Ascending aorta (tissue), 2 donors: ENCODE measurements at regions of chr10 and their contacts with region 1.

Region 1: DNA sequence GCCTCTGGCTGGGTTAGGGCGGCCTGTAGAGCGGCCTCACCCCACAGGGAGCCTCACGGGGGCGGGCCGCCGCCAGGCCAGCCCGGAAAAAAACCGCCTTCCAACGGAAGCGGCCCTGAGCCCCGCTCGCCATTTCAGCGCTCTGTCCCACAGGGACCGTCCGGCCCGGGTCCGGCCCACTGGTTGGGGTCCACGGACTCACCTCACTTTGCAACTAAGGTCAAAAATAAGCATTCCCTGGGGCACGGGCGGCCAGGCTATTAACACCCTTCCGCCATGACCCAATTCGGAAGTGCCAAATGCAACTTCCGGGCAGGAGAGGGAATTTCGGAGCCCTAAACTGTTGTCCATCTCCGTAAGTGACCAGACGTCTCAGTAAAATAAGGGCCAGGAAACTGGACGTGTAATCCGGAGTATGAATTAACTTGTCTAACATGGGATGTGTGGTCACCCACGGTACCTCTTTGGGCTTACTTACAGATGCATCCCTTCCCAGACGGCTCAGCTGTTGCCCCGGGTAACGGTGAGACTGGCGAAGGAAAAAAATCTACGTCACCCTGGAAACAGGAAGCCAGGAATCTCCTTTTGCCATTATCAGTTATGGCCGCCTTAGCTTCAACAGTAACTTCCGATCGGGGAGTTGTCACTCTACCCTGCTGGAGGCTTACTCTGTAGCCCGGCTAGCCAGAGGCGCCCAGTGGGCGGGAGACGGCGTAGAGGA is at the start of gene BBIP1:
- DNase-seq: no peak
- H3K4me3 ChIP-seq: peak within 1 kb of the TSS; percentile 78 to 98
- H3K27ac ChIP-seq: peak within 1 kb of the TSS; percentile 96 to 97
- H3K4me1 ChIP-seq: peaks cover 0 to 11% of the 10 kb centered on the region in 2 donors
- H3K27me3 ChIP-seq: no peaks in the 10 kb centered on the region
- CTCF ChIP-seq: no peak
- total RNA-seq, gene BBIP1: 1.5 TPM

Region 2: GRCh38 chr10:109633846-109634245 is 1285.0 kb before region 1 on chr10:
- intact Hi-C with region 1: no loop called
- DNase-seq: no peak
- H3K4me3 ChIP-seq: no peak overlapping the region
- H3K27ac ChIP-seq: no peak overlapping the region
- H3K4me1 ChIP-seq: no peaks in the 10 kb centered on the region
- H3K27me3 ChIP-seq: no peaks in the 10 kb centered on the region
- CTCF ChIP-seq: no peak

Region 3: DNA sequence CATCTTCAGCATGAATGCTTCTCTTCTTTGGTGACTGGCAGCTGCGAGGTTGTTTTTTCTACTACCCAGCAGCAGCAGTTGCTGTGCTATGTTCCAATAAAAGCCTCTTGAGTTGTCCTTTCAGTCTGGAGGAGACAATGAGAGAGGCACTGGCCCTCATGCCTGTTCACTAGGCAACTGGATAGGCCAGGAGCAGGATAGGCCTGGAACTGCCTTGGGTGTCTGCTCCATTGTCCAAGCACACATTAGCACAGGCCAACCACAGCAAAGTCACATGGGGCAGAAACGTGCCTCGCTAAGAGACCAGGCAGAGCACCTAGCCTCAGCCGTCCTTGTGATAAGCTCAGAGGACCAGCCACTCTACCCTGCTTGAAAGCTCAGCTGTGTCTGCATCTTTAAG is 124.0 kb before region 1 on chr10:
- intact Hi-C with region 1: no loop called
- DNase-seq: no peak
- H3K4me3 ChIP-seq: no peak overlapping the region
- H3K27ac ChIP-seq: peak overlapping the region in 1 of 2 donors; percentile 47
- H3K4me1 ChIP-seq: peaks cover 0 to 2% of the 10 kb centered on the region in 2 donors
- H3K27me3 ChIP-seq: no peaks in the 10 kb centered on the region
- CTCF ChIP-seq: no peak

Region 4: DNA sequence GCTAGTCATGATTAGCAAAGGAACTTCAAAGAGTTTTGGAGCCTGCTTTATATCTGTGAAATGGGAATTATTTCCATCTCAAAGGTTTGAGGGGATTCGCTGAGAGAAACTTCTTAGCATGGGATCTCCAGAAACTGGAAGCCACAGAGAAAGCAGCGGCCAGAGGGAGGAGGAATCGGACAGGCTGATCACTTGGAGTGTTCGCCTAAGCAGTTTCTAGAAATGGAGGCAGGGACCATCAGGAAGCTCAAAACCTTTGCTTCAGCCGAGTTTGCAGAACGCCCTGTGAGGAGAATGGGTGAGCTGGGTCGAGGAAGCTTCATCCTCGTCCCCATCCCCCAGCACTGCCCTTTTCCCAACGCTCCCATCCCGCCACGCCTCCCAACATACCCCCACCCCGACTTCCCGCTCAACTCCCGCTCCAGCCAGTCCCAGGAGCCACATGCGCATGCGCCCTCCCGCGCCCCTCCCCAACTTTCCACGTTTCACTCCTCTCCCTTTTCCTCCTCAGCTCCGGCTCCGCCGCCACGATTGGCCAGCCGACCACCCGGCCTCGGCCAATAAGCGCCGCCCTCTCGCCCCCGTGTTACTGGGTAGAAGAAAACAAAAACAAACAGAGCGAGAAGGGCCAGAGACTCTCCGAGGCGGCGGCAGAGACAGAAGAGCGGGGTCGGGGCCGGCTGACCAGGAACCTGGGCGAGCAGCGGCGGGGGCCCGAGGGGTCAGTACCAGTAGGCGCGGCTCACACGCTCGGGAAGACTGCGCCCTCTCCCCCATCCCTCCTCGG is 47.3 kb before region 1 on chr10 and contains the start of gene PDCD4:
- intact Hi-C with region 1: loop called (anchors 2 kb)
- DNase-seq: peak; percentile 99 to 100
- H3K4me3 ChIP-seq: peak within 1 kb of the TSS; percentile 87 to 88
- H3K27ac ChIP-seq: peak within 1 kb of the TSS; percentile 97 to 99
- H3K4me1 ChIP-seq: peaks cover 16 to 35% of the 10 kb centered on the region in 2 donors
- H3K27me3 ChIP-seq: no peaks in the 10 kb centered on the region
- CTCF ChIP-seq: no peak
- total RNA-seq, gene PDCD4: 10.3 TPM

Region 5: GRCh38 chr10:111004016-111004415 is 85.2 kb after region 1 on chr10:
- intact Hi-C with region 1: loop called (anchors 10 kb)
- DNase-seq: no peak
- H3K4me3 ChIP-seq: no peak overlapping the region
- H3K27ac ChIP-seq: no peak overlapping the region
- H3K4me1 ChIP-seq: no peaks in the 10 kb centered on the region
- H3K27me3 ChIP-seq: no peaks in the 10 kb centered on the region
- CTCF ChIP-seq: no peak

Region 6: GRCh38 chr10:111261081-111261615 is 342.3 kb after region 1 on chr10:
- intact Hi-C with region 1: no loop called
- DNase-seq: no peak
- H3K4me3 ChIP-seq: no peak overlapping the region
- H3K27ac ChIP-seq: no peak overlapping the region
- H3K4me1 ChIP-seq: no peaks in the 10 kb centered on the region
- H3K27me3 ChIP-seq: no peaks in the 10 kb centered on the region
- CTCF ChIP-seq: no peak

Region 7: DNA sequence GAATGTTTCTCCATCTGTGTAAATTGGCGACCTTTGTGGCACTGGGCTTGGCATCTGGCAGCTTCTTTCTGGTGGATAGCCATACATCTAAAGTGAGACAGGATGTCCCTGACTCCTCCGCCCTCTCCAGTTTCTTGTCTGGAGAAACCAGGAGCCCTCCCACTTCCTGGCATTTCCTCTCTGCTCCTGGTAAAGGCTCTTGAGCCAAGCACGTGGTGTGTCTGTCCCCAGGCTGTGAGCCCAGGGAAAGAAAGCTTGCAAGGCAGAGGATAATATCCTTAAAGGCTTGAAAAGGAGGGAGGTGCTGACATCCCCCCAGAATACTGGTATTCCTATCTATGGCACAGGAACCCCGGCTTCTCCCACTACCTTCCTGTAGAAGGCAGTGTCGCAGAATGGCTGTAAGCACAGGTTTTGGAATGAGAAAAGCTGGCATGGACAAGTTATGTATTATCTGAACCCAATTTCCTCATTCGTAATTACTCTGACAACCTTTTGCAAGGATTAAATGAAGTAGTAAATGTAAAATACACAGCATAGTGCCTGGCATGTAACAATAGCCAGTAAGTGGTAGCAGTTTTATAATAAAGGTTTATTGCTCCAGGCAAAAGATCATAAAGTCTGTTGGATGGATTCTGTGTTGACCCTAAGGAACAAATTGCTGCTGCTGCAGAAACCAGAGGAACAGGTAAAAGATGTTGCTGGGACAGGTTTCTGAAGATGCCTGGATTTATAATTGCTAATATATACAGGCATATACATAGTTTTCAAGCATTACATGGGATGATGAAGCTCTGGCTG is 1443.3 kb after region 1 on chr10:
- intact Hi-C with region 1: loop called (anchors 5 kb)
- DNase-seq: peak in 1 of 2 donors; percentile 87
- H3K4me3 ChIP-seq: no peak overlapping the region
- H3K27ac ChIP-seq: peak overlapping the region; percentile 58 to 69
- H3K4me1 ChIP-seq: peaks cover 10 to 26% of the 10 kb centered on the region in 2 donors
- H3K27me3 ChIP-seq: no peaks in the 10 kb centered on the region
- CTCF ChIP-seq: no peak